ENCODE measurements at regions of chr21 and their contacts with region 1.

Region 1: GRCh38 chr21:45091550-45092322 is 17.4 kb downstream of the ADARB1 start:
- DNase-seq: no peak
- H3K4me3 ChIP-seq: no peak overlapping the region
- H3K27ac ChIP-seq: no peak overlapping the region
- H3K4me1 ChIP-seq: peaks cover 55% of the 10 kb centered on the region
- H3K27me3 ChIP-seq: no peaks in the 10 kb centered on the region
- CTCF ChIP-seq: no peak
- POLR2A ChIP-seq: no peak

Region 2: DNA sequence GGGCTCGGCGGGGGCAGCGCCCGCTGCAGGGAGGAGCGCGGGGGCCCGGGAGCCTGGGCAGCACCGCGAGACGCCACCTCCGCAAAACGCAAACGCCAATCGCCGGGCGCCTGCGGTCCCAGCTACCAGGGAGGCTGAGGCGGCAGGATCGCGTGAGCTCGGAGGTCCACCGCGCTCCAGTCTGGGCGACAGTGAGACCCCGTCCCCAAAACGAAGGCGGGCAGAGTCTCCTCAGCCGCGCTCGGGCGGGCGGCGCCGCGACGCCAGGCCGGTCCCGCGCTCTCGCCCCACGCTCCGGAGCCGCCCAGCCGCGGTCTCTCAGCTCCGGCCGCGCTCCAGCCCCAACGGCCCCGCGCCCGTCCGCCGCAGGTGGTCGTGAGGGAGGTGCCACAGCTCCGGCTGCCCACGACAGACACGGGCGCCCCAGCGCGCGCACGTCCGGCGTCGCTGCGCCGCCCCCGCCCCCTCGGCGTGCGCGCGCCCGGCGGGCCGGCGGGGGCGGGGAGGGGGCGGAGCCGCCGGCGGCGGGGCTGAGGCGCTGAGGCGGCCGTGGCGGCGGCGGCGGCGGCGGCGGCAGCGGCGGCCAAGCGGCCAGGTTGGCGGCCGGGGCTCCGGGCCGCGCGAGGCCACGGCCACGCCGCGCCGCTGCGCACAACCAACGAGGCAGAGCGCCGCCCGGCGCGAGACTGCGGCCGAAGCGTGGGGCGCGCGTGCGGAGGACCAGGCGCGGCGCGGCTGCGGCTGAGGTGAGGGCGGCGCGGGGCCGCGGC is 17.5 kb before region 1 on chr21 and contains the start of gene ADARB1:
- CTCF ChIA-PET with region 1: interaction called, 6 read pairs
- POLR2A ChIA-PET with region 1: no interaction called
- dilution Hi-C with region 1: no loop called
- intact Hi-C with region 1: loop called (anchors 2 kb)
- DNase-seq: peak; percentile 29
- H3K4me3 ChIP-seq: peak within 1 kb of the TSS; percentile 68 to 81 (median 73)
- H3K27ac ChIP-seq: peak within 1 kb of the TSS; percentile 75
- H3K4me1 ChIP-seq: peaks cover 16% of the 10 kb centered on the region
- H3K27me3 ChIP-seq: no peaks in the 10 kb centered on the region
- CTCF ChIP-seq: no peak
- POLR2A ChIP-seq: peak; percentile 79
- total RNA-seq, gene ADARB1: 54.3 and 55.5 TPM in 2 replicates

Region 3: DNA sequence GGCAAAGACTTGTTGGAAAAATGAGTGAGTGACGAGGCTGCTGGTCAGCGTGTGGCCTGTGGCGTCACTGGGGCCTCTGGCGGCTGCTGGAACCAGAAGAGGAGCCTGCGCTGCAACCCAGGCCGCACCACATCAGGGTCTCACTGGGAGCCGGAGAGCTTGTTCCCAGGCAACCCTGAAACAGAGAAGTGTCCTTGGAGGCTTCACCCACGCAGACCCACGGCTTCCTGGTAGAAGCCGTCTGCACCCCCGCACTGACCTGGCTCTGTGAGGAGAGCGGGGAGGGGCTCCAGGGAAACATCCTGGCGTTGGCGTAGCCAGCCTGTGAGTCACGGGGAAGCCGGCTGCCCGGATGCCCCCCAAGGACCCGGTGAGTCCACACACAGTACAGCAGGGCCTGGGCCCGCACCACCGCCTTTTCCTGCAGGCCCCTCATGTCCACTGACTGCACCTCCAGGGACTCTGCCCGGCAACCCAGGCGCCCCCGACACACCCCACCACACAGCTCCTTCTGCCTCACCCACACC is 947.2 kb after region 1 on chr21:
- CTCF ChIA-PET with region 1: no interaction called
- POLR2A ChIA-PET with region 1: no interaction called
- dilution Hi-C with region 1: no loop called
- intact Hi-C with region 1: no loop called
- DNase-seq: peak; percentile 77
- H3K4me3 ChIP-seq: no peak overlapping the region
- H3K27ac ChIP-seq: peak overlapping the region; percentile 41
- H3K4me1 ChIP-seq: peaks cover 8% of the 10 kb centered on the region
- H3K27me3 ChIP-seq: no peaks in the 10 kb centered on the region
- CTCF ChIP-seq: no peak
- POLR2A ChIP-seq: no peak